Panc1 (cell line): ENCODE measurements at regions of chr6 and their contacts with region 1.

Region 1: DNA sequence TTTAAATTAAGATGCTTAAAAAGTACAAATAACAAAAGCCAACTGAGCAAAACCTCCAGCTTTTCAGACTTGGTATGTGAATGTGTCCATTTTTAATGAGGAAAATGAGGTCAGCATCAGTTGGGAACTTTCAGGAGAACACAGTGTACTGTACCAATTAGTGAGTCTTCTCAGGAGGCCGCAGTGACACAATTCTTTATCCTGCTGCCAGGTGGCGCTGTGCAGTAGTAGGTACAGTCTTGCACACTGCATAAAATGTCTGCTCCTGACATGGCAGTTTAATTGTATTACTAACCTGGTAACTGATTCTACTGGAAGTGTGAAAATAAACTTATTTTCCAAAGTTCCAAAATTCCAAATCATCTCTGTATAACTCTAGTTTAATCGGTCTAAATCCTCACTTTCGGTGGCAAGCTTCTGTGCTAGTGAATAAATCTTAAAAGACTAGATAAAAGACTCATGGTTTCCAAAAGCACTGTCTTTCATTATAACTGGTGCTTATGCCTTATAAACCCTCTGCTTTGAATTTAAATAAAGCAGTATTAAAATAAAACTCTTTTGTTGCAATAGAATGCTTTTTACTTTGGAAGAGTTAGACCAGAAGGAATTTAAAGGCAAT is 214.8 kb upstream of the MMS22L start:
- DNase-seq: peak; percentile 43
- ATAC-seq: peak; percentile 99
- H3K4me3 ChIP-seq: no peak overlapping the region
- H3K27ac ChIP-seq: no peak overlapping the region
- H3K4me1 ChIP-seq: no peaks in the 10 kb centered on the region
- H3K27me3 ChIP-seq: no peaks in the 10 kb centered on the region
- CTCF ChIP-seq: peak; percentile 91

Region 2: GRCh38 chr6:97925504-97925903 is 427.7 kb after region 1 on chr6:
- CTCF ChIA-PET with region 1: no interaction called
- POLR2A ChIA-PET with region 1: no interaction called
- in situ Hi-C with region 1: no loop called
- intact Hi-C with region 1: loop called (anchors 10 kb)
- DNase-seq: no peak
- ATAC-seq: no peak
- H3K4me3 ChIP-seq: no peak overlapping the region
- H3K27ac ChIP-seq: no peak overlapping the region
- H3K4me1 ChIP-seq: no peaks in the 10 kb centered on the region
- H3K27me3 ChIP-seq: no peaks in the 10 kb centered on the region
- CTCF ChIP-seq: peak; percentile 11; the same call in 1 of the 2 replicates